GM12878 (cell line): ENCODE measurements at regions of chr11 and their contacts with region 1.

Region 1: DNA sequence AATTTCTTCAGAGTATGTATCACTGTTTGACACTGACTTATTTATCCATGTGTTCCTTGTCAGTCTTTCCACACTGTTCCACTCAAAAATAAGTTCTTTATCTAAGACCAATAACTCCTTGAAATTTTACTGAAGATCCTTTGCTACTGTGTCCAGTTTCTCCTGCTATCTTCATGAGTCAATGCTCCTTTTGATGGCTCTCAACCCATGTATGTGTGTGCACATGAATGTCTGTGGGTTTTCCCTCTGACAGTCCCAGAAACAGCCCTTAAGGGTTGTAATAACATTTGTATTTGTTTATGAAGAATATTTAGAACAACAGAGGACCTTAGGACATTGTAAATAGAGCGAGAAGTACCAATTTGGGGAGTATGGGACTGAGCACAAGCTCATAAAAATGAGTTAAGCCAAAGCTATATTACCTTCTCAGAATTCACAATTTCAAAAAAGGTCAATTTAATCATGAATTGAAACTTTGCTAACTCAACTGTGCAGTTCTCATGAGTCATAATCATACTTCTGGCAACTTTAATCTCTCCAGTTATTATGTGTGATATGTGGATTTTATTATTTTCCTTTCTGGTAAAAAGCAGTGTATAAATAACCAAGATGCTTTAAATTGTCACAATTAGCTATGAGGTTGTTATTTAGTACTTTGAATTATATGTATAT is 533.6 kb downstream of the CNTN5 start:
- DNase-seq: no peak
- ATAC-seq: no peak
- H3K4me3 ChIP-seq: no peak overlapping the region
- H3K27ac ChIP-seq: no peak overlapping the region
- H3K4me1 ChIP-seq: no peaks in the 10 kb centered on the region
- H3K27me3 ChIP-seq: no peaks in the 10 kb centered on the region
- CTCF ChIP-seq: no peak
- EP300 ChIP-seq: no peak
- POLR2A ChIP-seq: no peak
- RAD21 ChIP-seq: no peak

Region 2: DNA sequence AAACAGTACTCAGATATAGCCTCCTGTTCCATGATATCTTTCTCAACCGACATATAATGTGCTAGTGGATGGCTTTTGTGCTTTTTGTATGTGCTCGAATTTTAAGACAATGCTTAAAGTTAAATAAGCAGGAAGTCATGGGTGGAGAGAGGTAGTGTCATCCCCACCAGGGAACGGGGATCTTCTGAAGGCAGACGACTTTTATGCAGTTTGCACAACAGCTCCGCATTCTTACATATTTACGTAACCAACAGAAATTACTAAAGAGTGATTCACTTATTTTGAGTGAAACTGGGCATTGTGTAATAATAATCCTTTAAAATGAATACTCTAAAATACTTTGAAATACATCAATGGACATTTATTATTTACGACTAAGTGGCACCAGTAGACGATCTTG is 228.6 kb before region 1 on chr11:
- CTCF ChIA-PET with region 1: no interaction called
- POLR2A ChIA-PET with region 1: no interaction called
- RAD21 ChIA-PET with region 1: no interaction called
- SMC1A ChIA-PET with region 1: no interaction called
- in situ Hi-C with region 1: no loop called
- intact Hi-C with region 1: no loop called
- DNase-seq: no peak
- ATAC-seq: no peak
- H3K4me3 ChIP-seq: no peak overlapping the region
- H3K27ac ChIP-seq: no peak overlapping the region
- H3K4me1 ChIP-seq: no peaks in the 10 kb centered on the region
- H3K27me3 ChIP-seq: no peaks in the 10 kb centered on the region
- CTCF ChIP-seq: no peak
- EP300 ChIP-seq: no peak
- POLR2A ChIP-seq: no peak
- RAD21 ChIP-seq: no peak

Region 3: GRCh38 chr11:99565333-99565732 is 11.0 kb after region 1 on chr11:
- CTCF ChIA-PET with region 1: interaction called, 7 read pairs
- POLR2A ChIA-PET with region 1: no interaction called
- RAD21 ChIA-PET with region 1: interaction called, 4 read pairs
- SMC1A ChIA-PET with region 1: interaction called, 25 read pairs
- in situ Hi-C with region 1: no loop called
- intact Hi-C with region 1: no loop called
- DNase-seq: peak; percentile 23
- ATAC-seq: no peak
- H3K4me3 ChIP-seq: no peak overlapping the region
- H3K27ac ChIP-seq: no peak overlapping the region
- H3K4me1 ChIP-seq: no peaks in the 10 kb centered on the region
- H3K27me3 ChIP-seq: no peaks in the 10 kb centered on the region
- CTCF ChIP-seq: no peak
- EP300 ChIP-seq: no peak
- POLR2A ChIP-seq: no peak
- RAD21 ChIP-seq: no peak